ENCODE measurements at regions of chrX and their contacts with region 1.

Region 1: DNA sequence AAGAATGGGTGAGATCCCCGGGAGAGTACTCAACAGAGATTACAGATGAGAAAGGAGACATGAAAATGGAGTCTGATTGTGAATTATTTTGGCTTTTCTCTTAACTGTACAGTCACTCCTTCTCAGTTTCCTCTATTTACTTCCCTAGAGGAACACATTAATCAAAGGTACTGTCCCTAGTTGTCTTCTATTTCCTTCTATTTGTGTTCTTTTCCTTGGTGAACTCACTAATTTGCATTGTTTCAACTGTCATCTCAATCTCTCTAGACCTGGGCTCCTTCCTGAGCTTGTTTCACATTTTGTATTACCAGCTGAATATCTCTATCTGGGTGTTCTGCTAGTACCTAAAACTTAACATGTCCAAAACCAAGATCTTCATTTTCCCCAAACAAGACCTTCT is 59.8 kb downstream of the ABCB7 start:
- DNase-seq: no peak
- ATAC-seq: no peak
- H3K4me3 ChIP-seq: no peak overlapping the region
- H3K27ac ChIP-seq: no peak overlapping the region
- H3K4me1 ChIP-seq: peaks cover 0 to 6% (median 0%) of the 10 kb centered on the region in 12 donors
- H3K27me3 ChIP-seq: no peaks in the 10 kb centered on the region
- CTCF ChIP-seq: no peak
- POLR2A ChIP-seq: no peak

Region 2: DNA sequence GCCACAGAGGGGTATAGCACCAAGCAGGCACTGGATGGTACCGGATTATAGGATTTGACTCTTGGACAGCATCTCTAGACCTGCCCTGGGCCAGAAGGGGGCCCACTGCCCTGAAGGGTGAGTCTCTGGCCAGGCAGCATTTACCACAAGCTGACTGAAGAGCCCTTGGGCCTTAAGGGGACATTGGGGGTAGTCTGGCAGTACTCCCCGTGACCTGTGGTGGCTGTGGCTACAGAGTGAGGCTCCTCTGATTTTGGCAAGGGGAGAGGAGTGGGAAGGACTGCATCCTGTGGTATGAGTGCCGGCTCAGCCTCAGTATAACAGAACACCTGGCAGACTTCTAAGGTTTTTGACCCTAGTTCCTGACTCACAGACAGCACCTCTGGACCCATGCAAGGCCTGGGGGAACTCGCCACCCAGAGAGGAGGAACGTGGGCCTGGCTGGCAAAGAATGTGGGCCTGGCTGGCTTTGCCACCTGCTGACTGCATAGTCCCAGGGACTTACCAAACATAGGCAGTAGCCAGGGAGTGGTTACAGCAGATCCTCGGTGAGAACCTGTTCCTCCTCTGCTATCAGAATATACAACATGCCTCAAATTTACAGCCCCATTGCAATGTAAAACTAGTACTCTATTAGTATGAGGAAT is 11.7 kb after region 1 on chrX:
- intact Hi-C with region 1: loop called in 1 of 10 experiments (anchors 1 kb)
- DNase-seq: peak in 2 of 5 donors; percentile 4 to 37
- ATAC-seq: peak in 3 of 4 donors; percentile 39 to 87 (median 60)
- H3K4me3 ChIP-seq: no peak overlapping the region
- H3K27ac ChIP-seq: peak overlapping the region in 2 of 12 donors; percentile 14 to 50
- H3K4me1 ChIP-seq: no peaks in the 10 kb centered on the region
- H3K27me3 ChIP-seq: no peaks in the 10 kb centered on the region
- CTCF ChIP-seq: no peak
- POLR2A ChIP-seq: no peak